Mucosa of descending colon (tissue), 3 donors: ENCODE measurements at regions of chr3 and their contacts with region 1.

Region 1: DNA sequence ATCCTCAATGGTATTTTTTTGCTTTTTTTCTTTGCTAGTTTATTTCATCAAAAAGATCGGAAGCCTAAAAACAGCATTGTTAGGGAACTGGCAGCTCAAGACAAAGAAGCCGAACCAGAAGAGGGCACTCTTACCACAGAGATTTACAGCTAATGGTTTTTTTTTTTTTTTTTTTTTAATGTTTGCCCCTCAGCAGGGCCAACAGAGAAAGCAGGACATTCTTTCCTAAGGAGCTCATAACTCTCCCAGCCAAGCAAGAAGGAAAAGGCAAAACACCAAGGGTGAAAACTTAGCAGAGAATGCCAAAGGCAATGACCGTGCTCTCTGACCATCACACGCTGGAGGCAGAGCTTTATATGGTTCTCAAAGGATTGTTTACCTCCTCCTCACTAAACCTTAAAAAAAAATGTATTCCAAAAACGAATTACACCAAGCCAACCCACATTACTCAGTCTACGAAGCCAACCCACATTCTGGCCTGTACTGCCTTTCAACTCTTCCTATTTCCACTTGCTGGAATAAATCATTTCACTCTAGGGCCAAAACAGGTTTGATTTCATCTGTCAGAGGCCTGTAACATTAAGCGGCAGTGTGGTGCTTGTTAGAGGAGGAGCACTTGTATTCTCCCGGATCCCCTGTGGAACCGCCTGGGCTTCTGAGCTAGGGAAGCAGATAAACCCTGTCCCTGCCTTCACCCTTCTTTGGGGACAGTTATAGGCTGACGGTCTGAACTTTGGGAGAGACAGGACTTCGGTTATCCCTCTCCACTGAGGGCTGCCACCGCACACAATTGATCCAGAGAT is 35.6 kb upstream of the GYG1 start:
- DNase-seq: peak in 1 of 3 donors; percentile 81
- ATAC-seq: peak; percentile 60
- H3K4me3 ChIP-seq: no peak overlapping the region
- H3K4me1 ChIP-seq: no peaks in the 10 kb centered on the region
- CTCF ChIP-seq: no peak

Region 2: GRCh38 chr3:148737104-148737530 is 218.6 kb before region 1 on chr3:
- intact Hi-C with region 1: no loop called
- DNase-seq: no peak
- ATAC-seq: no peak
- H3K4me3 ChIP-seq: no peak overlapping the region
- H3K4me1 ChIP-seq: no peaks in the 10 kb centered on the region
- CTCF ChIP-seq: no peak

Region 3: GRCh38 chr3:149267565-149267964 is 311.8 kb after region 1 on chr3:
- intact Hi-C with region 1: loop called (anchors 5 kb)
- DNase-seq: no peak
- ATAC-seq: no peak
- H3K4me3 ChIP-seq: no peak overlapping the region
- H3K4me1 ChIP-seq: no peaks in the 10 kb centered on the region
- CTCF ChIP-seq: no peak